ENCODE measurements at regions of chr19 and their contacts with region 1.

Region 1: DNA sequence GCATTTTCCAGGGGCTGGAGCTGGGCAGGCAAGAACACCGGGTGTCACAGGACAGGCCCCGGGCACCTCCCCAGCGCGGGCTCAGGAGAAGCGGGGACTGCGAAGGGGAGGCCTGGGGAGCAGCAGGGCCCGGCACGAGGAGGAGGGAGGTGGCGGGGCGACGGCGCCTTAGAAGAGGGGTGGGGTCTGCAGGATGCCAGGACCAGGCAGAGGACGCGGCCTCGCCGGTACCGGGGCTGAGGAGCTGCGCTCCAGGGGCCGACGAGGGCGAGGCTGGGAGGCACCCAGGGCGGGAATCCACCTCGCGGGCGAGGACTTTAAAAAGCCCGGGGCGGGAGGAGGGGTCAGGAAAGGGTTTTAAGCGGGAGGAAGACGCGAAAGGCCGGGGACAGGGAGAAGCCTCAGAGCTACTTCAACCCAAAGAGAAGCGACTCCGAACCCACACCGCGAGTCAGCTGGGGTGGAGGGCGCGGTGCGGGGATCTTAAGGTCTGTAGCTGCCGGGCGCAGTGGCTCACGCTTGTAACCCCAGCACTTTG is 665 bp downstream of the ZNF347 start:
- DNase-seq: peak in 1 of 2 donors; percentile 12
- ATAC-seq: peak; percentile 26 to 40
- H3K4me3 ChIP-seq: peak overlapping the region; percentile 61 to 82 (median 70)
- H3K27ac ChIP-seq: peak overlapping the region; percentile 60 to 79 (median 77)
- H3K4me1 ChIP-seq: peaks cover 0 to 17% of the 10 kb centered on the region in 2 donors
- H3K27me3 ChIP-seq: no peaks in the 10 kb centered on the region
- CTCF ChIP-seq: no peak
- POLR2A ChIP-seq: no peak

Region 2: GRCh38 chr19:53112286-53112685 is 45.9 kb before region 1 on chr19:
- in situ Hi-C with region 1: no loop called
- intact Hi-C with region 1: no loop called
- DNase-seq: no peak
- ATAC-seq: no peak
- H3K4me3 ChIP-seq: no peak overlapping the region
- H3K27ac ChIP-seq: no peak overlapping the region
- H3K4me1 ChIP-seq: no peaks in the 10 kb centered on the region
- H3K27me3 ChIP-seq: no peaks in the 10 kb centered on the region
- CTCF ChIP-seq: no peak
- POLR2A ChIP-seq: no peak

Region 3: DNA sequence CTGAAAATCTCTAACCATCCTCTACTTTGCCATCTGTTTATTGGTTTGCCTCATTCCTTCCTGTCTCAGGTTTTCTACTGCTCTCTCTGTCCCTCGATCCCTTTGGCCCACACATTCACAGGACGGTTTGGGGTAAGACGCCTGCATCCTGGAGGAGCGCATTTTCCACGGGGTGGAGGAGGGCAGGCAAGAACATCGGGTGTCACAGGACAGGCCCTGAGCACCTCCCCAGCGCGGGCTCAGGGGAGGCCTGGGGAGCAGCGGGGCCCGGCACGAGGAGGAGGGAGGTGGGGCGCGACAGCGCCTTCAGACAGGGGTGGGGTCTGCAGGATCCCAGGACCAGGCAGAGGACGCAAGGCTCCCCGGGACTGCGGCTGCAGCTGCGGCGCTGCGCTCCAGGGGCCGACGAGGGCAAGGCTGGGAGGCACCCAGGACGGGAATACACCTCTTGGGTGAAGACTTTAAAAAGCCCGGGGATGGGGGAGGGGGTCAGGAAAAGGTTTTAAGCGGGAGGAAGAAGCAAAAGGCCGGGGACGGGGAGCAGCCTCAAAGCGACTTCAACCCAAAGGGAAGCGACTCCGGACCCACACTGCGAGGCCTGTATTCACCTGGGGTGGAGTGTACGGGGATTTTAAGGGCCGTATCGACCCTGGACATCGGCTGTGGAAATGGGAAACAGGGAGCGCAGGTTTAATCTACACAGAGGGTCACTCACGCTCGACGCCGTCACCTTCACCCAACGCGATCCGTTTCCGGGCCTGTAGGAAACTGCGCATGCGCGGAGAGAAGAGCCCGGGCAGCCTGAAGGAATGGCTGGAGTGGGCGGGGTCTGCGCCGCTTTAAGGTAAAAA is 25.8 kb before region 1 on chr19 and contains the start of gene ZNF415:
- in situ Hi-C with region 1: no loop called
- intact Hi-C with region 1: loop called (anchors 2 kb)
- DNase-seq: peak; percentile 50 to 60
- ATAC-seq: peak; percentile 62 to 91
- H3K4me3 ChIP-seq: peak within 1 kb of the TSS; percentile 62 to 79 (median 72)
- H3K27ac ChIP-seq: peak within 1 kb of the TSS; percentile 81 to 85 (median 83)
- H3K4me1 ChIP-seq: peaks cover 10 to 15% of the 10 kb centered on the region in 2 donors
- H3K27me3 ChIP-seq: peaks cover 0 to 5% (median 0%) of the 10 kb centered on the region in 3 donors
- CTCF ChIP-seq: no peak
- POLR2A ChIP-seq: peak; percentile 41 to 61
- total RNA-seq, gene ZNF415: 1.6 to 4.0 (median 3.7) TPM

Region 4: DNA sequence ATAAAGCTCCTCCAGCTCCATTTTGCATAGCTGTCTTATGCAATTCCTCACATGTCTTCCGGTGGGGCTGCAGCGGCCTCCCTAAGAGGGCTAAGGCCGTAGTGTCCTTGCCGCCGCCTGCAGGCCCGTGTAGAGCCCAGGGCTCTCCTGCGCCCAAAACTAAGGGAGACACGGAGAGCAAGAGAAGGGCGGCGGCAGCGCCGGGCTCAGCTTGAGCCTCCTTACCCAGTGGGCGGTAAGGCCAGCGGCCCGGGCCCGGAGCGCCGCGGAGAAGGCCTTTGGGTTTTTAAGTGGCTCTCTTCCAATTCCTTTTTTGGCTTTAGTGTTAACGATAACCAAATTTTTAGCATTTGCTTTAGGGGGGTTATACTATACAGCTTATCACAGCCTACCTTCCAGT is 66.4 kb after region 1 on chr19:
- in situ Hi-C with region 1: no loop called
- intact Hi-C with region 1: no loop called
- DNase-seq: no peak
- ATAC-seq: no peak
- H3K4me3 ChIP-seq: no peak overlapping the region
- H3K27ac ChIP-seq: no peak overlapping the region
- H3K4me1 ChIP-seq: no peaks in the 10 kb centered on the region
- H3K27me3 ChIP-seq: no peaks in the 10 kb centered on the region
- CTCF ChIP-seq: no peak
- POLR2A ChIP-seq: no peak